ENCODE measurements at regions of chr2 and their contacts with region 1.

Region 1: GRCh38 chr2:136238286-136239078 is 120.5 kb upstream of the CXCR4 start:
- DNase-seq: peak; percentile 93
- ATAC-seq: peak; percentile 70
- H3K4me3 ChIP-seq: peak overlapping the region in 1 of 5 experiments; percentile 17
- H3K4me3 Mint-ChIP-seq: peak overlapping the region; percentile 23
- H3K27ac ChIP-seq: peak overlapping the region; percentile 98
- H3K27ac Mint-ChIP-seq: peak overlapping the region; percentile 87
- H3K4me1 ChIP-seq: peaks cover 66 to 74% of the 10 kb centered on the region in 2 donors
- H3K4me1 Mint-ChIP-seq: peaks cover 85% of the 10 kb centered on the region
- H3K27me3 ChIP-seq: no peaks in the 10 kb centered on the region
- H3K27me3 Mint-ChIP-seq: no peaks in the 10 kb centered on the region
- CTCF ChIP-seq: no peak

Region 2: DNA sequence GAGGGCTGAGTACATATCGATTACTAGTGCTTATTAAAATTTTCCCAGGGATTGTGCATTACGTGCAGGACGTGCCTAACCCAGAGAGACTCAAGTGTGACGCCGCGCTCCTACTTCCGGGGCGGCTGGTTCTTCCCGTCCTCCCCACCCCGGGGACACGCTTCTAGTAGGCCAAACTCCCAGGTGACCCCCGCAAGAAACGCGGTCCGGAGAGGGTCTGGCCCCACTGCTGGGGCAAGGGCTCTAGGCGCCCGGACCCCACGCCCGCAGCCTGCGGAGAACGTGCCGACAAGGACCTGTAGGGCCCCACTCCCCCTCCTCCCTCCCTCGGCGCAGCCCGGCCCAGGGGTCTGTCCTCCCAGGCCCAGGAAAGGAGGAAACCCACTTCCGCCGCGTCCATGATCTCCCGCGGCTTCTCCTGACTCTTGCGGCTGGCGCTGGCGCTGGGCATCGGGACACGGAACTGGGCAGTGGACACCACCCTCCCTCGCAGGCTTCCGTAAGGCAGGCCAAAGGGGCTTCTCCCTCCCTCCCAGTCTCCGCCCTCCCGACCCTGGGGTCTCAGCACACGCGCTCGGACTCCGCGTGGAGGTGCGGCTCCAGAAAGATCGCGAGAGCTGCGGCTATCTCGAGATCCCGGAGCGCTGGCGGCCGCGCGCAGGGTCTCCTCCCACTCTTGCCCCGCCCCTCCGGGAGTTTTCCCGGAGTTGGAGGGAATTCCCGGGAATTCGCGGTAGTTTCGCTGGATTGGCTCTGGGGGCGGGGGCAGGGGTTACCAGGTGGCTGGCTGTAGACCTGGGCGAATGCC is 253.3 kb before region 1 on chr2 and contains the start of gene DARS1:
- CTCF ChIA-PET with region 1: no interaction called
- POLR2A ChIA-PET with region 1: interaction called, 5 read pairs
- intact Hi-C with region 1: loop called (anchors 1 kb)
- DNase-seq: peak; percentile 91
- ATAC-seq: peak; percentile 84
- H3K4me3 ChIP-seq: peak within 1 kb of the TSS; percentile 75 to 99 (median 93)
- H3K4me3 Mint-ChIP-seq: peak within 1 kb of the TSS; percentile 97
- H3K27ac ChIP-seq: peak within 1 kb of the TSS; percentile 94 to 97
- H3K27ac Mint-ChIP-seq: peak within 1 kb of the TSS; percentile 98
- H3K4me1 ChIP-seq: peaks cover 29 to 31% of the 10 kb centered on the region in 2 donors
- H3K4me1 Mint-ChIP-seq: peaks cover 50% of the 10 kb centered on the region
- H3K27me3 ChIP-seq: no peaks in the 10 kb centered on the region
- H3K27me3 Mint-ChIP-seq: no peaks in the 10 kb centered on the region
- CTCF ChIP-seq: no peak
- total RNA-seq, gene DARS1: 88.3 and 92.0 TPM in 2 replicates

Region 3: GRCh38 chr2:136117909-136118818 is 120.3 kb before region 1 on chr2 and contains the start of gene CXCR4:
- CTCF ChIA-PET with region 1: interaction called, 32 read pairs
- POLR2A ChIA-PET with region 1: interaction called, 136 read pairs
- intact Hi-C with region 1: loop called (anchors 1 kb)
- DNase-seq: peak; percentile 94
- ATAC-seq: peak; percentile 55
- H3K4me3 ChIP-seq: peak within 1 kb of the TSS; percentile 93 to 100 (median 98)
- H3K4me3 Mint-ChIP-seq: peak within 1 kb of the TSS; percentile 98
- H3K27ac ChIP-seq: peak within 1 kb of the TSS; percentile 96 to 99
- H3K27ac Mint-ChIP-seq: peak within 1 kb of the TSS; percentile 100
- H3K4me1 ChIP-seq: peaks cover 48 to 52% of the 10 kb centered on the region in 2 donors
- H3K4me1 Mint-ChIP-seq: peaks cover 59% of the 10 kb centered on the region
- H3K27me3 ChIP-seq: no peaks in the 10 kb centered on the region
- H3K27me3 Mint-ChIP-seq: no peaks in the 10 kb centered on the region
- CTCF ChIP-seq: no peak
- total RNA-seq, gene CXCR4: 2,047 and 2,119 TPM in 2 replicates

Region 4: DNA sequence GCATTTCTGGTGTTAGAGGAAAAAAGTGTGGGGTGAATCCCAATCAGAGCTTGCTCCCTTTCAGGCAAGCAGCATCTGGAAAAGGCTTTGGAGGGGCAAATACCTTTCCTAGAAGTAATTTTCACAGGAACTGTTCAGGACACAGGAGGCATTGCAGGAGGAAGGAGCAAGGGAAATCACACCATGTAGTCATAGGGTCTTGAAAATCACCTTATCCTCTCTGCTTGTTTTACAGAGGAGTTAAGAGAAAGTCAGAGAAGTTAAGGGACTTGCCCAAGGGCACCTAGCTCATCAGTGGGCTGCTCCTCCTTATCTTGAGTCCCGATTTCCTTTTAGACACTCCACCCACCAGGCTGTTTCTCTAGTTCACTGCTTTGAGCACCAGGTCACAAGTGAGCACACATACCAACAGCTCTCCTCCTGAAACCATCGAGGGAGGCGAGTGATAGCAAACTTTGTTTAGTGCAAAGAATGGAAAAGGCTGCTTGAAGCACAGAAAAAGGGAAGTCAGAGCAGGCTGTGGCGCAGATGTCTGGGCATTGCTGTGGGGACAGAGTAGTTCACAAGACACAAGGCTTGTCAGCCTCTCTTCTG is 31.4 kb before region 1 on chr2:
- CTCF ChIA-PET with region 1: interaction called, 58 read pairs
- POLR2A ChIA-PET with region 1: interaction called, 135 read pairs
- intact Hi-C with region 1: loop called (anchors 1 kb)
- DNase-seq: peak; percentile 94
- ATAC-seq: peak; percentile 65
- H3K4me3 ChIP-seq: peak overlapping the region in 4 of 5 experiments; percentile 1 to 44 (median 26)
- H3K4me3 Mint-ChIP-seq: peak overlapping the region; percentile 84
- H3K27ac ChIP-seq: peak overlapping the region; percentile 98 to 99
- H3K27ac Mint-ChIP-seq: peak overlapping the region; percentile 99
- H3K4me1 ChIP-seq: peaks cover 70 to 74% of the 10 kb centered on the region in 2 donors
- H3K4me1 Mint-ChIP-seq: peaks cover 77% of the 10 kb centered on the region
- H3K27me3 ChIP-seq: no peaks in the 10 kb centered on the region
- H3K27me3 Mint-ChIP-seq: no peaks in the 10 kb centered on the region
- CTCF ChIP-seq: no peak

Region 5: DNA sequence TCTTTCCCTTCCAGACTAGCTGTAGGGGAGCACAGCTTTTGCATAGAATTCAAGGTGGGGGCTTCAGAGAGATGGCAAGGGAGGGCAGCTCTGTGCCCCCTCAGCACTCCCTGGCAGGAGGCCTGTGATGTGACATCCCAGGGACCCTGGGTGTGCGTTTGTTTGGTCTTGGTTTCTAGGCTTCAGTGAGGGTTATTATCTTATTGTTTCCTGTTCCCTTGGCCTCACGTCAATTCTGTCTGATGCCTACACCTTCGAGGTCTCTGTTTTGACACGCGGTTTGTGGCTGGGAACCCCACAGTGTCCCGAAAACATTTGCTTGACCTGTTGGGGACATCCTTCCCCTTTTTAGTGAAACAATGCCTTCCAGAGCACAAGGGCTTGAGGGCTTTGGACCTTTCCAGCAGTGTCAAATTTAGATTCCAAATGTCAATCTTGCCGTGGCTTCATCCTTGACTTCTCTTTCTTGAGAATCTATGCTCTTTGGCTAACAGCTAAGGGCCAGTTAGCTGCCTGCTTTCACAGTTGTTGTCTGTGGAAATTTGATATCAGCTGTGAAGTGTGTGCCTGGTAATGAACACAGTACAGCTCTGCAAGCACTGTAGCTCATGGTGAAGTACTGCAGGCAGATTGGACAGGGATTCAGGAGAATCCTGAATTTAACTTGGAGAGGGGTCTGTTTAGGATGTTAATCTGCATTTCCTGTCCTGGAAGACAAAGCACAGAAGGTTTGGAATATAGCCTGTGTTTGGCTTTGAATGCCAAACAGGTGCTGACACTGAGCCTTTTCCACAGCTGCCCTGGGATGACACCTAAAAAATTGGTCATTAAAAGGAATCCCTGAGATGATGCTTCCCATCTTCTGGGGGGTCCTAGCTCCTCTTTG is 12.3 kb before region 1 on chr2:
- CTCF ChIA-PET with region 1: interaction called, 97 read pairs
- POLR2A ChIA-PET with region 1: interaction called, 66 read pairs
- intact Hi-C with region 1: loop called (anchors 1 kb)
- DNase-seq: peak; percentile 88
- ATAC-seq: peak; percentile 84
- H3K4me3 ChIP-seq: no peak overlapping the region
- H3K4me3 Mint-ChIP-seq: peak overlapping the region; percentile 42
- H3K27ac ChIP-seq: peak overlapping the region; percentile 62 to 75
- H3K27ac Mint-ChIP-seq: peak overlapping the region; percentile 95
- H3K4me1 ChIP-seq: peaks cover 46 to 54% of the 10 kb centered on the region in 2 donors
- H3K4me1 Mint-ChIP-seq: peaks cover 75% of the 10 kb centered on the region
- H3K27me3 ChIP-seq: no peaks in the 10 kb centered on the region
- H3K27me3 Mint-ChIP-seq: no peaks in the 10 kb centered on the region
- CTCF ChIP-seq: no peak

Region 6: DNA sequence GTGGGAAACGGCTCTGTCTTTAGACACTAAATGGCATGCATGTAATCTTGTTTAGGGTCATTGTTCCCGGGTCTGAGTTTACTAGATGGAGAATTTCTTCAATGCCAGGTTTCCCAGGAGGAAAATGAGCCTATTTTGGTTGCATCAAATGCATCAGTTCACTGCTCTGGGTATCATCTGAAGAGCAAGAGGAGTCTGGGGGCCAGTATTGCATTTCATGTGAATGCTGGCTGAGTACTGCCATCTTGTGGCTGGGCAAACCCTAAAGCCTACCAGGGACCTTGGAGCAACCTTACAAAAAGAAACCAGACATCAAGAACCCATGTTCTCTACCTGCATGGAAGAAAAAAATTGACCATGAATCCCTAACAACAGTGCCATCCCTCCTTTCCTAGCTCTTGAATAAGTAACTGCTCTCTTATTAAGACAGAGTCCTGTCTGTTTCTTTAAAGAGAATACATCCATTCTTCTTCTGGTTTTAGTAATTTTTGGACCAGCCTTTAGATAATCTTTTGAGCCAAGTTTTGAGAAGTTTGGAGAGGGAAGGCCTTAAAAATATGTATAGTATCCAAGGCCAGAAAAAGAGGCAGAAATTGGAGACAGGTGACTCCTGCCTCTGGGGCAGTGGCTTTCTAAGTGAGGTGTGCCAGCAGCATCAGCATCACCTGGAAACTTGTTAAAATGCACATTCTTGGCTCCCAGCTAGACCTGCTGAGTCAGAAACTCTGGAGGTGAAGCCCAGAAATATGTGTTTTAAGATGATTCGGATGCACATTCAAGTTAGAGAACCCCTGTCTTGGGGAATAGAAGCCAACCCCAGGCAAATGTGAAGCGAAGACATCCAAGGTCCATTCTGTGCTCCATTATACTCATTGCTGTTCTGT is 140.5 kb after region 1 on chr2:
- CTCF ChIA-PET with region 1: interaction called, 169 read pairs
- POLR2A ChIA-PET with region 1: interaction called, 33 read pairs
- intact Hi-C with region 1: loop called (anchors 1 kb)
- DNase-seq: peak; percentile 90
- ATAC-seq: peak; percentile 29
- H3K4me3 ChIP-seq: peak overlapping the region in 1 of 5 experiments; percentile 8
- H3K4me3 Mint-ChIP-seq: peak overlapping the region; percentile 49
- H3K27ac ChIP-seq: peak overlapping the region in 1 of 2 donors; percentile 71
- H3K27ac Mint-ChIP-seq: peak overlapping the region; percentile 97
- H3K4me1 ChIP-seq: peaks cover 61 to 65% of the 10 kb centered on the region in 2 donors
- H3K4me1 Mint-ChIP-seq: peaks cover 81% of the 10 kb centered on the region
- H3K27me3 ChIP-seq: no peaks in the 10 kb centered on the region
- H3K27me3 Mint-ChIP-seq: no peaks in the 10 kb centered on the region
- CTCF ChIP-seq: peak; percentile 88

Measured in B cell (primary cell).